A673 (cell line): ENCODE measurements at regions of chr12 and their contacts with region 1.

Region 1: GRCh38 chr12:119302451-119303080 is 32.0 kb upstream of the CCDC60 start:
- DNase-seq: peak; percentile 19
- H3K4me3 ChIP-seq: no peak overlapping the region
- H3K27ac ChIP-seq: no peak overlapping the region
- H3K4me1 ChIP-seq: no peaks in the 10 kb centered on the region
- H3K27me3 ChIP-seq: peaks cover 44% of the 10 kb centered on the region
- CTCF ChIP-seq: no peak

Region 2: DNA sequence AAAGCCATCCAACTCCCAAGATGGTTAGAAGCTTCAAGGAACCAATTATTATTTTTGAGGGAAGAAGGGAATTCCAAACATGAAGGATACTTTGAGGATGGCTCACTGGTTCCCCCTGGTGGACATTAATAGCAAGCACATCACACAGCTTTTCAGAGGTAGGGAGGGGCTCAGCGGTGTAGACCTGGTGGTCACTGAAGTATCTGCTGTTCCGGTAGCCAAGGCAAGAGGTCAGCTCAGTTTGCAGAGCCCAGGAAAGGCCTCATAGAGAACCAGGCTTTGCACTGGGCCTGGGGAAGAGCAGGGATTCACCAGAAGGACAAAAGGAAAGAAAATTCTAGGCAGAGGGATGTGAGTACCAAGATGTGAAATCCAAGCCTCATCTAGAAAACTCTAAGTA is 1452.5 kb before region 1 on chr12:
- CTCF ChIA-PET with region 1: interaction called, 14 read pairs
- POLR2A ChIA-PET with region 1: no interaction called
- intact Hi-C with region 1: no loop called
- DNase-seq: peak; percentile 60
- H3K4me3 ChIP-seq: no peak overlapping the region
- H3K27ac ChIP-seq: no peak overlapping the region
- H3K4me1 ChIP-seq: no peaks in the 10 kb centered on the region
- H3K27me3 ChIP-seq: peaks cover 24% of the 10 kb centered on the region
- CTCF ChIP-seq: peak; percentile 88